IMR-90 (cell line): ENCODE measurements at regions of chr1 and their contacts with region 1.

Region 1: DNA sequence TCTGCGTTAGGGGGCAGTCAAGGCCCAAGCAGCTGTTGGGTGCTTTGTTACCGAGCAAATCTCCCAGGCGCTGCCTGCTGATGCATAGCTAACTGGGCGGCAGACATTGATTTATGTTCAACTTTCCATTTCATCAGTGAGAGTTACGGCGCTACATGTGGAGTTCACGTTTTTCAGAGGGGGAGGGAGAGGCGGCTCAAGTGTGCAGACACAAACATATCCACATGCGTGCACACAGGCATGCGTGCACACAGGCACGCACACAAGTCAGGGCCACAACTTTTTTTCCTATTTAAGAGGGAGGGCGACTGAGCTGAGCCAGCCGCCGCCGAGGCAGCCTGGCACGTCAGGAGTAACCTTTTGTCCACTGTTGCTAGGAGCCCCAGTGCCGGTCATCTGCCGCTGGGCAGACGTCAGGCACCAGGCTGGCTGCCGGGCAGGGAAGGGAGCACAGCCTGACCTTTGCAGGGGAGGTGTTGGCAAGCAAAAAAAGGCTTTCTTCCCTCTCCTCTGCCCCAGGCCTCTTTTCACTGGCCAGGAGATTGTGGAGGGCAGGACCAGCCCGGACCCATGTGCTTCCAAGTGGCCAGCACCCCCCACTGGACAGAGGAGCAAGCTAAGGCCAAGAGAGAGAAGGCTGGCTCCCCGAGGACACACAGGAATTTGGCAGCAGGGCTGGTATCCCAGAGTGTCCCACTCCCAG is 73.3 kb downstream of the MRPL37 start:
- DNase-seq: peak; percentile 93
- ATAC-seq: peak; percentile 81
- H3K4me3 ChIP-seq: peak overlapping the region; percentile 7; the same call in 1 of the 2 replicates
- H3K27ac ChIP-seq: peak overlapping the region; percentile 63
- H3K4me1 ChIP-seq: peaks cover 51% of the 10 kb centered on the region
- H3K27me3 ChIP-seq: no peaks in the 10 kb centered on the region
- CTCF ChIP-seq: peak; percentile 87
- POLR2A ChIP-seq: peak; percentile 13
- RAD21 ChIP-seq: peak; percentile 89

Region 2: GRCh38 chr1:54121482-54122134 is 151.6 kb before region 1 on chr1:
- CTCF ChIA-PET with region 1: interaction called, 3 read pairs
- POLR2A ChIA-PET with region 1: no interaction called
- dilution Hi-C with region 1: no loop called
- in situ Hi-C with region 1: no loop called
- intact Hi-C with region 1: loop called (anchors 1 kb)
- DNase-seq: peak; percentile 82
- ATAC-seq: peak; percentile 90
- H3K4me3 ChIP-seq: peak overlapping the region; percentile 13; the same call in 1 of the 2 replicates
- H3K27ac ChIP-seq: no peak overlapping the region; the same call in 1 of the 2 replicates
- H3K4me1 ChIP-seq: peaks cover 9% of the 10 kb centered on the region
- H3K27me3 ChIP-seq: no peaks in the 10 kb centered on the region; the same call in 1 of the 2 replicates
- CTCF ChIP-seq: peak; percentile 90
- POLR2A ChIP-seq: peak; percentile 44; the same call in 1 of the 2 replicates
- RAD21 ChIP-seq: peak; percentile 89

Region 3: GRCh38 chr1:54335755-54336108 is 62.5 kb after region 1 on chr1:
- CTCF ChIA-PET with region 1: interaction called, 3 read pairs
- POLR2A ChIA-PET with region 1: no interaction called
- dilution Hi-C with region 1: no loop called
- in situ Hi-C with region 1: no loop called
- intact Hi-C with region 1: loop called (anchors 2 kb)
- DNase-seq: peak; percentile 95
- ATAC-seq: peak; percentile 69
- H3K4me3 ChIP-seq: peak overlapping the region; percentile 13
- H3K27ac ChIP-seq: peak overlapping the region; percentile 97
- H3K4me1 ChIP-seq: peaks cover 50% of the 10 kb centered on the region
- H3K27me3 ChIP-seq: no peaks in the 10 kb centered on the region
- CTCF ChIP-seq: no peak
- POLR2A ChIP-seq: no peak
- RAD21 ChIP-seq: peak; percentile 30; the same call in 1 of the 2 replicates

Region 4: GRCh38 chr1:54384911-54385726 is 111.9 kb after region 1 on chr1:
- CTCF ChIA-PET with region 1: no interaction called
- POLR2A ChIA-PET with region 1: no interaction called
- dilution Hi-C with region 1: no loop called
- in situ Hi-C with region 1: no loop called
- intact Hi-C with region 1: loop called (anchors 1 kb)
- DNase-seq: peak; percentile 53
- ATAC-seq: peak; percentile 77
- H3K4me3 ChIP-seq: no peak overlapping the region
- H3K27ac ChIP-seq: peak overlapping the region; percentile 41
- H3K4me1 ChIP-seq: peaks cover 21% of the 10 kb centered on the region
- H3K27me3 ChIP-seq: no peaks in the 10 kb centered on the region
- CTCF ChIP-seq: no peak
- POLR2A ChIP-seq: no peak
- RAD21 ChIP-seq: no peak

Region 5: GRCh38 chr1:54564312-54565112 is 291.3 kb after region 1 on chr1:
- CTCF ChIA-PET with region 1: no interaction called
- POLR2A ChIA-PET with region 1: no interaction called
- dilution Hi-C with region 1: no loop called
- in situ Hi-C with region 1: no loop called
- intact Hi-C with region 1: no loop called
- DNase-seq: no peak
- ATAC-seq: no peak
- H3K4me3 ChIP-seq: no peak overlapping the region
- H3K27ac ChIP-seq: no peak overlapping the region
- H3K4me1 ChIP-seq: peaks cover 3% of the 10 kb centered on the region; the same call in 1 of the 2 replicates
- H3K27me3 ChIP-seq: no peaks in the 10 kb centered on the region; the same call in 1 of the 2 replicates
- CTCF ChIP-seq: no peak
- POLR2A ChIP-seq: no peak
- RAD21 ChIP-seq: no peak